HCT116 (cell line): ENCODE measurements at regions of chr12 and their contacts with region 1.

Region 1: DNA sequence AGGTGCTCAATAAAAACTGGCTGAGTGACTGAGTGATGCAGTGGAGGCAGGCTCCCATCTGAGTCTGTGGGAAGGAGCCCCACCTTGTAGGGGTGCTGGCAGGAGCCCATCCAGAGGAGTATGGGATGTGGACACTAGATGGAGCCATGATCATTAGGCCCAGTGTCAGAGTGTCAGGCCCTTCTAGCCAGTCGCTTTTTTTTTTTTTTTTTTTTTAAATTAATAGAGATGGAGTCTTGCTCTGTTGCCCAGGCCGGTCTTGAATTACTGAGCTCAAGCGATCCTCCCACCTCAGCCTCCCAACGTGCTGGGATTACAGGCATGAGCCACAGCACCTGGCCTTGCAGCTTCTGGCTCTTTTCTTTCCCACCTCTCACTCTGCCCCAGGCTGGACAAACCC is 11.5 kb downstream of the RITA1 start:
- DNase-seq: peak; percentile 63
- ATAC-seq: peak; percentile 88
- H3K4me3 ChIP-seq: no peak overlapping the region
- H3K27ac ChIP-seq: no peak overlapping the region
- H3K4me1 ChIP-seq: peaks cover 29 to 44% of the 10 kb centered on the region in 2 experiments
- H3K27me3 ChIP-seq: no peaks in the 10 kb centered on the region
- CTCF ChIP-seq: peak; percentile 64 to 76 (median 73)
- POLR2A ChIP-seq: no peak
- RAD21 ChIP-seq: peak; percentile 90

Region 2: GRCh38 chr12:113184900-113185773 is 11.9 kb before region 1 on chr12 and contains the starts of genes DDX54 and RITA1:
- CTCF ChIA-PET with region 1: interaction called, 5 read pairs
- POLR2A ChIA-PET with region 1: interaction called, 15 read pairs
- RAD21 ChIA-PET with region 1: no interaction called
- intact Hi-C with region 1: no loop called
- DNase-seq: peak; percentile 78
- ATAC-seq: peak; percentile 87
- H3K4me3 ChIP-seq: peak within 1 kb of the TSS; percentile 87 to 89
- H3K27ac ChIP-seq: peak within 1 kb of the TSS; percentile 95
- H3K4me1 ChIP-seq: peaks cover 8 to 42% of the 10 kb centered on the region in 2 experiments; a peak in 3 of 4 replicates
- H3K27me3 ChIP-seq: no peaks in the 10 kb centered on the region
- CTCF ChIP-seq: no peak
- POLR2A ChIP-seq: peak; percentile 57
- RAD21 ChIP-seq: no peak
- total RNA-seq, gene DDX54: 110 TPM
- total RNA-seq, gene RITA1: 20.7 TPM

Region 3: GRCh38 chr12:113299619-113300237 is 102.7 kb after region 1 on chr12:
- CTCF ChIA-PET with region 1: no interaction called
- POLR2A ChIA-PET with region 1: no interaction called
- RAD21 ChIA-PET with region 1: no interaction called
- intact Hi-C with region 1: loop called (anchors 5 kb)
- DNase-seq: peak; percentile 79
- ATAC-seq: peak; percentile 91
- H3K4me3 ChIP-seq: peak overlapping the region in 1 of 2 experiments; percentile 46; a peak in 2 of 4 replicates
- H3K27ac ChIP-seq: peak overlapping the region; percentile 91
- H3K4me1 ChIP-seq: peaks cover 22 to 25% of the 10 kb centered on the region in 2 experiments
- H3K27me3 ChIP-seq: no peaks in the 10 kb centered on the region
- CTCF ChIP-seq: no peak
- POLR2A ChIP-seq: no peak
- RAD21 ChIP-seq: no peak

Region 4: GRCh38 chr12:113334786-113335540 is 138.0 kb after region 1 on chr12 and contains the start of gene SLC8B1:
- CTCF ChIA-PET with region 1: no interaction called
- POLR2A ChIA-PET with region 1: interaction called, 3 read pairs
- RAD21 ChIA-PET with region 1: no interaction called
- intact Hi-C with region 1: loop called (anchors 10 kb)
- DNase-seq: no peak
- ATAC-seq: peak; percentile 93
- H3K4me3 ChIP-seq: peak within 1 kb of the TSS; percentile 69 to 81
- H3K27ac ChIP-seq: peak within 1 kb of the TSS; percentile 65
- H3K4me1 ChIP-seq: peaks cover 4 to 22% of the 10 kb centered on the region in 2 experiments; a peak in 3 of 4 replicates
- H3K27me3 ChIP-seq: no peaks in the 10 kb centered on the region
- CTCF ChIP-seq: no peak
- POLR2A ChIP-seq: peak; percentile 73
- RAD21 ChIP-seq: no peak
- total RNA-seq, gene SLC8B1: 30.9 TPM

Region 5: GRCh38 chr12:113424915-113425823 is 228.2 kb after region 1 on chr12:
- CTCF ChIA-PET with region 1: interaction called, 3 read pairs
- POLR2A ChIA-PET with region 1: no interaction called
- RAD21 ChIA-PET with region 1: no interaction called
- intact Hi-C with region 1: loop called (anchors 2 kb)
- DNase-seq: no peak
- ATAC-seq: peak; percentile 63
- H3K4me3 ChIP-seq: no peak overlapping the region
- H3K27ac ChIP-seq: no peak overlapping the region
- H3K4me1 ChIP-seq: peaks cover 5 to 24% of the 10 kb centered on the region in 2 experiments; a peak in 3 of 4 replicates
- H3K27me3 ChIP-seq: no peaks in the 10 kb centered on the region
- CTCF ChIP-seq: peak; percentile 72 to 95 (median 89)
- POLR2A ChIP-seq: no peak
- RAD21 ChIP-seq: peak; percentile 82